Activated T-helper 1 cell treated with anti-CD3 and anti-CD28 coated beads, Interleukin-12 subunit alpha, Interleukin-12 subunit beta, Interleukin-2, Interleukin-4 antibody, amounts not matched to agents 30 ng/mL and 10 ng/mL and 1 ng/mL, durations not matched to agents 14 hours and 24 hours and 36 hours (primary cell): ENCODE measurements at regions of chr20 and their contacts with region 1.

Region 1: GRCh38 chr20:56373940-56374339 is 15.2 kb downstream of the FAM210B start:
- DNase-seq: no peak
- H3K4me3 Mint-ChIP-seq: no peak overlapping the region
- H3K27ac Mint-ChIP-seq: no peak overlapping the region
- H3K4me1 Mint-ChIP-seq: peaks cover 45% of the 10 kb centered on the region
- H3K27me3 Mint-ChIP-seq: no peaks in the 10 kb centered on the region

Region 2: DNA sequence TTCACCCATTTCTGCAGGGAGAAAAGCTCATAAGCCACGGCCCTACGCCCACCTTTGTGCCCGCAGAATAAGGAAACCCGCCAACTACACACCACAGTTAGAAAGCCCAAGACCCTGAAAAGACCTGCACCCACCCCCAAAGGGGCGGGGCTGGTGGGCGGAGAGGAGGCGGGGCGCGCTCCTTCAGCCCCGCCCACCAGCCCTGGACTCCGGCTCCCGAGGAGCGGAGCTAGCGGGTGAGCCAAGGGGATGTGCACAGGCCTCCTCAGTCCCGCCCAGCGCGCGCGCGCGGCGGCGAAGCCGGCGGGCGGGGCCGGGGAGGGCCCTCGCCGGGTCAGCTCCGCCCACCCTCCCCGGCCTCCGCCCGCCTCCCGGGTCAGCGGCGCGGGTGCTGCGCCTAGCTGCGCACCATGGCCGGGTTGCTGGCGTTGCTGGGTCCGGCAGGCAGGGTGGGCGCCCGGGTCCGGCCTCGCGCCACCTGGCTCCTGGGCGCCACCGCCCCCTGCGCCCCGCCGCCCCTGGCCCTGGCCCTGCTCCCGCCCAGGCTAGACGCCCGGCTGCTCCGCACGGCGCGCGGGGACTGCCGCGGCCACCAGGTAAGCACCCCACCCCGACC is 15.2 kb before region 1 on chr20 and contains the start of gene FAM210B:
- intact Hi-C with region 1: loop called (anchors 1 kb)
- DNase-seq: peak; percentile 76
- H3K4me3 Mint-ChIP-seq: peak within 1 kb of the TSS; percentile 85
- H3K27ac Mint-ChIP-seq: peak within 1 kb of the TSS; percentile 48
- H3K4me1 Mint-ChIP-seq: peaks cover 7% of the 10 kb centered on the region
- H3K27me3 Mint-ChIP-seq: peaks cover 7% of the 10 kb centered on the region
- total RNA-seq, gene FAM210B: 6.2 and 6.9 TPM in 2 replicates

Region 3: GRCh38 chr20:56429502-56429901 is 55.6 kb after region 1 on chr20:
- intact Hi-C with region 1: no loop called
- DNase-seq: no peak
- H3K4me3 Mint-ChIP-seq: peak overlapping the region; percentile 73
- H3K27ac Mint-ChIP-seq: peak overlapping the region; percentile 94
- H3K4me1 Mint-ChIP-seq: peaks cover 59% of the 10 kb centered on the region
- H3K27me3 Mint-ChIP-seq: no peaks in the 10 kb centered on the region